Spleen (tissue), 13 donors: ENCODE measurements at regions of chr11 and their contacts with region 1.

Region 1: GRCh38 chr11:103682318-103683184 is 353.9 kb upstream of the DDI1 start:
- DNase-seq: no peak
- H3K4me3 ChIP-seq: no peak overlapping the region
- H3K27ac ChIP-seq: peak overlapping the region in 1 of 8 donors; percentile 26
- H3K4me1 ChIP-seq: peaks cover 0 to 10% (median 5%) of the 10 kb centered on the region in 6 donors
- H3K27me3 ChIP-seq: no peaks in the 10 kb centered on the region
- CTCF ChIP-seq: peak; percentile 35 to 82 (median 70)
- POLR2A ChIP-seq: no peak

Region 2: DNA sequence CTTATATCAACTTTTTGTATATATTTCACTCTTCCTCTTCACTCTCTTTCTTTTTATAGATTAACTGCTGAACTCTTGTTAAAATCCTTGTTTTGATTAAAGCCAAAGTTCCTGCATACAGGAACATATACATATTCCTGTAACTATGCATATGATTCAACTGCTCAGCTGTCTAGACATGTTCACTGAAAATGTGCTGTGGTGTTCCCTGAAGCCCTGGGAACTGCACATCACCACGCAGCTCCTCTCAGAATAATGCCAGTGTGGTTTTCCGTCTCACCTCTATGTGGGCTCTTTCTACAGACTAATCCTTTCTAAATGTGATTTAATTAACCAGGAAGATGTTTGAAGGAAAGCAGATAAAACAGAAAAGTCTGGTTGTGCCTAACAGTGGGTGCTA is 782.2 kb before region 1 on chr11:
- intact Hi-C with region 1: no loop called
- DNase-seq: no peak
- H3K4me3 ChIP-seq: no peak overlapping the region
- H3K27ac ChIP-seq: no peak overlapping the region
- H3K4me1 ChIP-seq: no peaks in the 10 kb centered on the region
- H3K27me3 ChIP-seq: no peaks in the 10 kb centered on the region
- CTCF ChIP-seq: no peak
- POLR2A ChIP-seq: no peak

Region 3: GRCh38 chr11:104073950-104074705 is 391.6 kb after region 1 on chr11:
- intact Hi-C with region 1: no loop called
- DNase-seq: no peak
- H3K4me3 ChIP-seq: no peak overlapping the region
- H3K27ac ChIP-seq: no peak overlapping the region
- H3K4me1 ChIP-seq: peaks cover 0 to 21% (median 0%) of the 10 kb centered on the region in 6 donors
- H3K27me3 ChIP-seq: no peaks in the 10 kb centered on the region
- CTCF ChIP-seq: no peak
- POLR2A ChIP-seq: no peak

Region 4: DNA sequence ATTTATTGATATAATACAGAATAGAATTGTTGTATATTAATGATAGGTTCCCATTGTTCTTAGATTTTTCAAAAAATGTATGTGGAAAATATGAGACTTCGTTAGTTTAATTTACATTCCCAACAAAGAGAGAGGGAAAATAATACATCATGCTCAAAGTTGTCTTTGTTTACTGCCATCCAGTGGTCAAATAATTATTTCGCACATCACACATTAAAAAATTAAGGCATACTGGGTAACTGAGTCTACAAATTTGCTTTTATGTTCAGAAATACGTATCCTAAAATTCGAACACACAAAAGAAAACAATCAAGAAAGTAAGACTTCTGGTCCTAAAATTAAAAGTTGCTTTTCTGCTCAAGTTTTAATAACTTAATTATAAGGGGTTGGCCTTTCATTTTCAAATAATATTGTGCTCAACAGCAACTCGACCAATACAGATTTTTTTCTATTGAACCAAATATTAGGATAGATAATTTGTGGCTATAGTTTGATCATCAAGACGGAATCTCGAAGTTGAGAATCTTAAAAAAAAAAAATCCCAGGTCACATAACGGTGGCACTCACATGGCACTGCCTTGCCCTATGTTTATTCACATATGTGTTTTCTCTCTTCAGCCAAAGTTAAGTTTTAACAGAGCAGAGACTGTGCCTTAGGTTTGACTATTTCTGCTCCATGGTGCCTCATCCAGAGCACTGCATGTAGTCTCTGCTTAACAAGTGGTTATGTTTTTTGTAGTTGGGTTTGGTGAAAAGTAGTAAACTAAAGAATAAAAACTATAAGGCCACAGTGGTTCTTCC is 469.1 kb after region 1 on chr11:
- intact Hi-C with region 1: loop called (anchors 10 kb)
- DNase-seq: no peak
- H3K4me3 ChIP-seq: no peak overlapping the region
- H3K27ac ChIP-seq: no peak overlapping the region
- H3K4me1 ChIP-seq: peaks cover 0 to 13% (median 7%) of the 10 kb centered on the region in 6 donors
- H3K27me3 ChIP-seq: no peaks in the 10 kb centered on the region
- CTCF ChIP-seq: peak in 5 of 11 experiments; percentile 20 to 32 (median 26)
- POLR2A ChIP-seq: no peak